ENCODE measurements at regions of chr2 and their contacts with region 1.

Region 1: DNA sequence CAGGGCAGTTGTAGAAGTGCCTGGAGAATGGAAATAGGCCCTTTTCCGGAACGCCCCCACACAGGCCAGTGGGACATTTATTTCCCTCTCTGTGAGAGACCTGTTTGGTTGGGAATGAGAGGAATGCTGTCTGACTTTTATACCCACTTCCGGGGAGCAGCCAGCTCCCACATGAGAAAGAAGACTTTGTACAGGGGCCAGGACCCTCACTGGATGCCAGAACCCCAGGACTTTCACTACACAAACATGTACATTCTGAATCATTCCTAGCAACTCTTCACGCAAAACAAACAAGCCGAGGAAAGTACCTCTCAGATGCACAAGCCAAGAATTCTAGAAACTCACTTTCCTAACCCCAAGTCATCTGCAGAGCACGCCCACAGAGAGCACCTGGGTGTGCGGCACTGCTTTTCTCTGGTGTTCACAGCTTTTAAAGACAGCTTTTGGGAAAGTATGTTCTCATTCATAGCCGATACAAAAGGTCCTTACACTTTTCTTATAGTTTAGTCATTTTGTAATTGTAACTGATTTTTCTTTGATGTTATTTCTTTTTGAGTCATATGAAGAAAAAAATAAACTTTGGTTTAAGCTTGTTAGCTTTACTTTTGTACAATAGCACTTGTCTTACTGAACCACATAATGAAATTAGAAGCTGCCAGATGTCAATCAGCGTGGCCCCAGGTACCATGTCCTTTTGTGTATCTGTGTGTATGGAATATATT is 856.1 kb upstream of the ID2 start:
- DNase-seq: peak; percentile 83
- H3K4me3 Mint-ChIP-seq: peak overlapping the region; percentile 47
- H3K27ac Mint-ChIP-seq: peak overlapping the region; percentile 96
- H3K4me1 Mint-ChIP-seq: peaks cover 28% of the 10 kb centered on the region
- H3K27me3 Mint-ChIP-seq: no peaks in the 10 kb centered on the region

Region 2: GRCh38 chr2:6945087-6945813 is 880.5 kb before region 1 on chr2:
- intact Hi-C with region 1: no loop called
- DNase-seq: peak; percentile 53
- H3K4me3 Mint-ChIP-seq: peak overlapping the region; percentile 12
- H3K27ac Mint-ChIP-seq: peak overlapping the region; percentile 83
- H3K4me1 Mint-ChIP-seq: peaks cover 44% of the 10 kb centered on the region
- H3K27me3 Mint-ChIP-seq: no peaks in the 10 kb centered on the region

Region 3: GRCh38 chr2:7567646-7568045 is 258.1 kb before region 1 on chr2:
- intact Hi-C with region 1: loop called (anchors 1 kb)
- DNase-seq: peak; percentile 89
- H3K4me3 Mint-ChIP-seq: peak overlapping the region; percentile 65
- H3K27ac Mint-ChIP-seq: peak overlapping the region; percentile 97
- H3K4me1 Mint-ChIP-seq: peaks cover 58% of the 10 kb centered on the region
- H3K27me3 Mint-ChIP-seq: no peaks in the 10 kb centered on the region

Region 4: DNA sequence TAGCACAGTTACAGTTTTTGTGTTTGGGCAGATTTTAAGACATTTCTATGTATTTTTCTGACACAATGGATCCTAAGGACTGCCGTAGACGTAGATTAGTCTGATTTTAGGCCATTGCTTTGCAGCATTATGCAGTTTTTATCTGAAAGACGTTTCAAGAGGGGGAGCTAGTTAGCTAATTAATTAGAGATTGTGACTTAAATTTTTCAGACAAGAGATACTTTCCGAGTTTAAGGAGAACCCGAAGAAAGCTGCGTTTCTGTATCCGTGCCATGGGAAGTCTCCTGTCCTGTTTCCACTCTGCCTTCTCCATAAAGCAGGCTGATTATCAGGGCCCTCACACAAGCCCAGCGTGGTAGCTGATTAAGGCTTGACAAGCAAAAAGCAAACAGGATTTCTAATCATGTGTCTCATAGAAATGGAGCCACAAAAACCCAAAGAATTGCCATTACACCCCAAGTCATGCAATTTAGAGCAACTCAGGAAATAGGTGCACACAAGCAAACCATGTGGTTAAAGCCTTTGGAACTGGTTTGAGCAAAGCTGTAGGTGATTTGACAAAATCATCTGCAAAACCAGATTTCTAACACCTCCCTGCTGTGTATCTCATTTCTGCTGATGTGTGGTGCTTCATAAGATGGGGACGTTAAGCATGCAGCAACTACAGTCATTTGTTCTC is 100.4 kb before region 1 on chr2:
- intact Hi-C with region 1: loop called (anchors 1 kb)
- DNase-seq: peak; percentile 88
- H3K4me3 Mint-ChIP-seq: peak overlapping the region; percentile 87
- H3K27ac Mint-ChIP-seq: peak overlapping the region; percentile 92
- H3K4me1 Mint-ChIP-seq: peaks cover 53% of the 10 kb centered on the region
- H3K27me3 Mint-ChIP-seq: no peaks in the 10 kb centered on the region

Region 5: GRCh38 chr2:7788736-7789135 is 37.0 kb before region 1 on chr2:
- intact Hi-C with region 1: no loop called
- DNase-seq: no peak
- H3K4me3 Mint-ChIP-seq: no peak overlapping the region
- H3K27ac Mint-ChIP-seq: no peak overlapping the region
- H3K4me1 Mint-ChIP-seq: no peaks in the 10 kb centered on the region
- H3K27me3 Mint-ChIP-seq: no peaks in the 10 kb centered on the region

Region 6: DNA sequence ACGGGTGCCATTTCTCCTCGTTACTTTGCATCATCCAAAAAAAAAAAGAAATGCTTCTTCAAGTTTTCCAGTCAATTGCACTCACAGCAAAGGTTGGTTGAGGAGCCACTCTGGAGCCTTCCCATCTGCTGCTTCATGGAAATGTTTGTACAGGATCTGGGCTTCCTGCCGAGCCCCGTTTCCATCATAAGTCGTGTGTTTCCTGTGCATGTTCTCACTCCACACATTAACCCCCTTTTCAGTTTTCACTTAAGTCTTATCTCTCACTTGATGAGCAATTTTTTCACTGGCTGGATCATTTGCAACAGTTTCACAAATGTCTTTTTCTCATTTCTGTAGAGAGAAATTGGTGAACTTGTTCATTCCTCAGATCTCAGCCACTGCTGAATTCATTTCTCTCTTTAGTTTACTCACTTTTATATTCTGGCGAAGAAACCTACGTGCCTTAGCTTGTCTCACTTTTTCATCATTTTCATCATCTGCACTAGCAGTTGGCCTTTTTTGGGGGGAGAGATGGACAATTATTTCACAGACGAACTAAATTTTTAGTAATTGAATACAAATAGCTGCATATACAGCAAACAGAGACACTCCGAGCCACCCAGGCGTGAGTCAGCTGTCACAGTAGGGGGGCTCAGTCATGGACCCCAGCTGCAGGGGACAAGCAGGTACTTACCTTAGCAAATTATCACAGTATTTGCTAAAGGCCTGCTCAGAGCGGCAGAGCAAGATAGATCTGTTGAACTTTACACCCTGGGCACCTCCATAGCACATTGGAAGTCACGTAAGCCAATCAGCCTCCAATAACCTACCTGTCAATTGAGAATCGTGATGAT is 105.3 kb after region 1 on chr2:
- intact Hi-C with region 1: loop called (anchors 1 kb)
- DNase-seq: peak; percentile 54
- H3K4me3 Mint-ChIP-seq: peak overlapping the region; percentile 1
- H3K27ac Mint-ChIP-seq: peak overlapping the region; percentile 76
- H3K4me1 Mint-ChIP-seq: peaks cover 10% of the 10 kb centered on the region
- H3K27me3 Mint-ChIP-seq: no peaks in the 10 kb centered on the region

Region 7: GRCh38 chr2:8152392-8153257 is 326.9 kb after region 1 on chr2:
- intact Hi-C with region 1: loop called (anchors 1 kb)
- DNase-seq: peak; percentile 49
- H3K4me3 Mint-ChIP-seq: no peak overlapping the region
- H3K27ac Mint-ChIP-seq: peak overlapping the region; percentile 12
- H3K4me1 Mint-ChIP-seq: peaks cover 26% of the 10 kb centered on the region
- H3K27me3 Mint-ChIP-seq: no peaks in the 10 kb centered on the region

Region 8: DNA sequence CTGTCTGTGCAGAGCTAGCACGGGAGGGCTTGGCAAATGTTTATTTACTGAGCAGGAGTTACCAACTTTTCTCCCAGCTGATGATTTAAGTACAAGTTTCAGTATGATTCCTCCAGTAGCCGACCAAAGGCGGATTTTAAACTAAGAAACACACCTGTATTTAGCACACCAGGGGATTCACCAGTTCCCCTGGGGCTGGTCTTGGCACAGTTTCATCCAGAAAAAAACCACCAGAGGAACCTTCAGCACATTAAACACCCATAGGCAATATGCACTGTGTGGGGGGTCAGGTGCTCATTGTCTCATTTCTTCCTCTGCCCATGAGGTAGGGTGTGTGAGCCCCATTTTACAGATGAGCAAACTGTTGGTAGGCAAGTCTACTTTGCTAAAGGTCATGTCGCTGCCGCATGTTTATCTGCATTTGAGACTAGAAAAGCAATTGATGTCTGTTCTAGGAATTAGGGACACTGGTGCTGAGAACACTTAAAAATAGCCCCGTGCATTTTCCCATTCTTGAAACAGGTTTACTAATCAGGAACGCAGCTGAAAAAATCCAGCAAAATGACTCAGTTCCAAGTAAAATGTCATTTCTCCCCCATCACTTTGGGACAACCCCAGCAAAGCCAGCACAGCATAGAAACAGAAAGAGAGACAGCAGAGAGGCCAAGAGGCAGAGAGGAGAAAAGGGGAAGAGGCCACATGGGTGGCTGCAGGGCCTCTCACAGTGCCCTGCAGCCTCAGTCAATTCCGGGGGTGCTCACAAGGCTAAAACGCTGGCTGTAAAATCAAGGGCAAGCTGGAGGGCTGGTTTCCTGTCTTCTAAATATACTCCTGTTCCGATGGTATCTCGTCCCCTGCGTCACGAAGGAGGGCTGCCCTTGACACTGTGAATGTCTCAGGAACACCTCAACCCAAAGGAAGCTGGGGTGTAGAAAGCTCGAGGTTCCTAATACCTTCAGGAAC is 689.3 kb after region 1 on chr2:
- intact Hi-C with region 1: loop called (anchors 1 kb)
- DNase-seq: peak; percentile 87
- H3K4me3 Mint-ChIP-seq: peak overlapping the region; percentile 58
- H3K27ac Mint-ChIP-seq: peak overlapping the region; percentile 96
- H3K4me1 Mint-ChIP-seq: peaks cover 63% of the 10 kb centered on the region
- H3K27me3 Mint-ChIP-seq: no peaks in the 10 kb centered on the region

Measured in activated CD4-positive, alpha-beta T cell treated with anti-CD3 and anti-CD28 coated beads, Interleukin-2, amount 10 ng/mL, durations not matched to agents 24 days and 14 days (primary cell).